ENCODE measurements at regions of chr17 and their contacts with region 1.

Region 1: DNA sequence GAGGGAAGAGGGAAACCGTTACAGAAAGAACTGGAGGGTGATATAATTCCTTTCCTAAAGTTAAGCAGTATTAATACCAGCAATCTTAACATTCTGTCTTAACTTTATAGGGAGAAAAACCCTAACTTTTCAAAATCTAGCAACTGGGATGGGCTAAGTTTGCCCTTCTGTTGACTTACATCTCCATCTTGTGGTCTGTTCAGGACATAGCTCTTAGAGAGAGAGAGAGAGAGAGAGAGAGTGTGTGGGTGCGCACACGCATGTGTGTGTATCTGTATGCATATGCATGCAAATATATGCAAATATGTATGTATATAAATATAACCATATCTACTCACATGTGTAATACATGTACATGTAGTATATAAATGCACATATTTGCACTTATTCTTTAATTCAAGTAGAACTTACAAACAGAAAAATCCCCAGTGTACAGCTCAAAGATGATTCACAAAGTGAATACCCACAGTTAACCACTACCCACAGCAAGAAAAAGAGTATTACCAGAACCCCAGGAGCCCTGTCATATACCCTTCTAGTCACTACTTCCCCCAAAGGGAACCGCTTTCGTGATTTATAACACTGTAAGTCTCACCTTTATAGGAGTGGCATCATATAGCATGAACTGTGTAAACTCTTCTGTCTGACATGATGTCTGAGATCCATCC is 46.5 kb downstream of the STX8 start:
- DNase-seq: peak; percentile 24
- H3K4me3 ChIP-seq: no peak overlapping the region
- H3K27ac ChIP-seq: no peak overlapping the region
- H3K4me1 ChIP-seq: no peaks in the 10 kb centered on the region
- H3K27me3 ChIP-seq: no peaks in the 10 kb centered on the region
- CTCF ChIP-seq: peak; percentile 37 to 41
- POLR2A ChIP-seq: no peak

Region 2: DNA sequence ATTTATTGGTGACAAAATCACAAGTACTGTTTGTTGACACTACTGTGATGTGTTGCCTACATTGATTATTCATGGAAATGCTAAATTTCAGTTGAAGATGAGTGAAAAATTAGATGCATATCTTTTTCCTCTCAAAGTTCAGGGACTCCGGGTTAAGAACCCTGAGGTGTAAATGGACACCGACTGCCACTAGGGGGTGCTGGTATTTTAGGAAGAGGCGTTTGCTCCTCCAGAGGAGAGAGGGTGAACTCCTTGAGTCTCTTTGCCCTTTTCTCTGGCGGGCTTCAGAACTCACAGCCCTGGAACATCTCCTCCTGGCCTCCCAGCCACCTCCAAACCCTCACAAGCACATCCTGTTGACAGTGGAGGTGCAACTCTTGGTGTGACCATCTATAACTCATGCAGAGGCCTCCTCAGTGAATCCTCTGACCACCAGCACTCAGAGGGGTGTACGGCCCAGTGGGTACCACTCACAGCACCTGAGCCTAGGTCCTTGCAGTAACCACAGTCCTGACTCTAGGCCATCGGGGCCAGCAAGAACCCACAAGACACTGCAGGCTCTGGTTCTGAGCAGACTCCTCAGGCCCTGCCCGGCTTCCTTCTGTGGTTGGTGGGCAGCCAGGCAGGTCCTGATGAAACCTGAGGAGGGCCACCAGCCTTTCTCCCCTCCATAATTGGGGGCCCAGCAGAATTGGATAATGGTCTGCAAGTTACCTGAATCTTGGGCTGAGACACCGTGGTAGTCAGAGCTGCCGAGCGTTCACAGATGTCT is 537.5 kb before region 1 on chr17:
- CTCF ChIA-PET with region 1: interaction called, 106 read pairs
- POLR2A ChIA-PET with region 1: no interaction called
- dilution Hi-C with region 1: no loop called
- intact Hi-C with region 1: no loop called
- DNase-seq: peak; percentile 33
- H3K4me3 ChIP-seq: no peak overlapping the region
- H3K27ac ChIP-seq: no peak overlapping the region
- H3K4me1 ChIP-seq: no peaks in the 10 kb centered on the region
- H3K27me3 ChIP-seq: no peaks in the 10 kb centered on the region
- CTCF ChIP-seq: peak; percentile 65 to 71
- POLR2A ChIP-seq: no peak

Measured in endothelial cell of umbilical vein (primary cell).